Cardiac septum (tissue), 1 donor: ENCODE measurements at regions of chr3 and their contacts with region 1.

Region 1: GRCh38 chr3:141105828-141106628 is 54.9 kb downstream of the SPSB4 start:
- DNase-seq: peak; percentile 55

Region 2: GRCh38 chr3:140007911-140008869 is 1097.8 kb before region 1 on chr3:
- intact Hi-C with region 1: no loop called
- DNase-seq: no peak

Region 3: DNA sequence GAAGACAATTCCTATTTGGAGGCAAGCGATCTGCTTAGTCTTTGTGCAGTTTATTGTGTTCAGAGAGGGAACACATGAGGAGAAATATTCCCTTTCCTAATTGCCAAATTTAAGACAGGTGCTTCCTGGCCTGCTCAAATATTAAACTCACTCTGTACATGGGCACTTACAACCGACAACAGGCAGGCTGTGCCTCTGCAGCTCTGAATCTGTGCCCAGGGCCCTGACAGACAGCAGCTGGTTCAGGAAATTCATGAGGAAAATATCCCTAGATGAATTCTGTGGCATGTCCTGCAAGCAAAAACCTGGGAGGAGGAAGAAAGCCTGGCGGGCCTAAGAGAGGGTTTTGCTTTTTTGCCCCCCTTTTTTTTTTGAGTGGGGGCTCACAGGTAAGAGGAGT is 597.5 kb before region 1 on chr3:
- intact Hi-C with region 1: no loop called
- DNase-seq: no peak

Region 4: DNA sequence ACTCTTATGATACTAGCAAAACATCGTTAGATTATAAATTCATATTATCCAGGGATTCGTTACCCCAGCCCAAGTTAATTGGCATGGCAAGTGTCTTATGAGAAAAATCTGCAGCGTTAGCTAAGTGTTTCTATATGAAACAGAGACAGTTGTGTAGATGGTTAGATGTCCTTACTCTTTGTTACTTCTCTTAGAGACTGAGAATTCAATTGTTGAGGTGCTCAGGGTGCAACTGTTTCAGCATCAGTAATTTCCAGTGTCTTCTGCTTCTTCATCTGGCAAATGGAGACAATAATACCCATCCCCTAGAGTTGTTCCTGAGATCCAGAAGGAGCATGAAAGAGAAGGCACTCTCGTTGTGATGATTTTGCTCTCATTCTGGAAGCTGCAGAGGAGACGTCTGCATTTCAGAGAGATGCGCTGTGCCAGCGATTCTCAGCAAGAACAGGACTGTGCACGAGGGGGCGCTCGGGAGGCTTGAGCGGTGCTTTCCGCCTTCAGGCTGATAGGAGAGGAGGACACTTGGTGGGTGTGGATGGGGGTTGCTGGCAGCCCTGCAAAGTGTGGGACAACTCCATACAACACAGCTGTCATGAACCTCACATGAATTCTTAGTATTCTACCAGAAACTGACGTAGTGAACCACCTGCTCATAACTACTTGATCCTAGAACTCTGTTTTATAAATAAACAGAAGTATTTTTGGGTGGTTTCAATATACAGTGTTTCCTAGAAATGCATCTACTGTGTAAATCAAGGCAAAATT is 94.6 kb before region 1 on chr3:
- intact Hi-C with region 1: loop called (anchors 2 kb)
- DNase-seq: peak; percentile 87

Region 5: DNA sequence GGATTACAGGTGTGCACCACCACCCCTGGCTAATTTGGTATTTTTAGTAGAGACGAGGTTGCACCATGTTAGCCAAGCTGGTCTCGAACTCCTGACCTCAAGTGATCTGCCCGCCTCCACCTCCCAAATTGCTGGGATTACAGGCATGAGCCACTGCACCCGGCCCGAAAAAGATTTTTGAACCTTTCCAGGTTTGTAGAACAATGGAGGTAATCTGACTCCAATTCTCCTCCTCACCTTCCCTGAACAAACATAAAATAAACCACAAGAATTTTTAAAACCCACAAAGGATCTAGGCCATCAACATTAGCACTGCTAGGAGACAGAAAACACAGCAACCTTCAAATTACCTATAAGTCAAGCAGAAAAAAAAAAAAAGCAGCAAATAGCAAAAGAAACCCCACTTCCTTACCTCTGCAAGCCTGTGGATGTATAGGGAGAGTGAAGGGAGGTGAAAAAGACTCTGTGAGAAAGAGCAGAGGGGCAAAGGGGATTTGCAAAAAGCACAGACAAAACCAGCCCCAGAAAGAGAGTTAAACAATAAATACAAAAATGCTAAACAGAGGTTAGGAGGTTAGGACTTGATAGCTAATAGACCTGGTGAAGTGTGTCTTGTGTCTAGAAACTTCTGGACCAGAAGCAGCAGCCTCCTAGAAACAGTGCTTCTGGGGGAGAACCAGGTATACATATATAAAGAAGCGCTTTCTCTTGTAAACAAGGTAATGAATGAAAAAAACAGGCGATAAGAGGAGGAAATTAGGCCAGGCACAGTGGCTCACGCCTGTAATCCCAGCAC is 1011.2 kb after region 1 on chr3:
- intact Hi-C with region 1: no loop called
- DNase-seq: no peak